ENCODE measurements at regions of chrX and their contacts with region 1.

Region 1: GRCh38 chrX:77899081-77899828 is at the start of gene COX7B:
- DNase-seq: peak; percentile 96
- H3K4me3 ChIP-seq: peak within 1 kb of the TSS; percentile 55
- H3K27ac ChIP-seq: peak within 1 kb of the TSS; percentile 71
- H3K4me1 ChIP-seq: no peaks in the 10 kb centered on the region
- H3K27me3 ChIP-seq: no peaks in the 10 kb centered on the region
- CTCF ChIP-seq: peak; percentile 50
- total RNA-seq, gene COX7B: 381 and 432 TPM in 2 replicates

Region 2: GRCh38 chrX:77785486-77786364 is 113.5 kb before region 1 on chrX and contains the start of gene ATRX:
- CTCF ChIA-PET with region 1: no interaction called
- POLR2A ChIA-PET with region 1: no interaction called
- intact Hi-C with region 1: loop called (anchors 10 kb)
- DNase-seq: peak; percentile 88
- H3K4me3 ChIP-seq: peak within 1 kb of the TSS; percentile 75
- H3K27ac ChIP-seq: peak within 1 kb of the TSS; percentile 98
- H3K4me1 ChIP-seq: no peaks in the 10 kb centered on the region
- H3K27me3 ChIP-seq: no peaks in the 10 kb centered on the region
- CTCF ChIP-seq: no peak
- total RNA-seq, gene ATRX: 101 and 112 TPM in 2 replicates

Region 3: GRCh38 chrX:78029663-78030062 is 130.4 kb after region 1 on chrX:
- CTCF ChIA-PET with region 1: no interaction called
- POLR2A ChIA-PET with region 1: no interaction called
- intact Hi-C with region 1: no loop called
- DNase-seq: peak; percentile 54
- H3K4me3 ChIP-seq: no peak overlapping the region
- H3K27ac ChIP-seq: no peak overlapping the region
- H3K4me1 ChIP-seq: no peaks in the 10 kb centered on the region
- H3K27me3 ChIP-seq: no peaks in the 10 kb centered on the region
- CTCF ChIP-seq: peak; percentile 76

Measured in A673 (cell line).